ENCODE measurements at regions of chr9 and their contacts with region 1.

Region 1: DNA sequence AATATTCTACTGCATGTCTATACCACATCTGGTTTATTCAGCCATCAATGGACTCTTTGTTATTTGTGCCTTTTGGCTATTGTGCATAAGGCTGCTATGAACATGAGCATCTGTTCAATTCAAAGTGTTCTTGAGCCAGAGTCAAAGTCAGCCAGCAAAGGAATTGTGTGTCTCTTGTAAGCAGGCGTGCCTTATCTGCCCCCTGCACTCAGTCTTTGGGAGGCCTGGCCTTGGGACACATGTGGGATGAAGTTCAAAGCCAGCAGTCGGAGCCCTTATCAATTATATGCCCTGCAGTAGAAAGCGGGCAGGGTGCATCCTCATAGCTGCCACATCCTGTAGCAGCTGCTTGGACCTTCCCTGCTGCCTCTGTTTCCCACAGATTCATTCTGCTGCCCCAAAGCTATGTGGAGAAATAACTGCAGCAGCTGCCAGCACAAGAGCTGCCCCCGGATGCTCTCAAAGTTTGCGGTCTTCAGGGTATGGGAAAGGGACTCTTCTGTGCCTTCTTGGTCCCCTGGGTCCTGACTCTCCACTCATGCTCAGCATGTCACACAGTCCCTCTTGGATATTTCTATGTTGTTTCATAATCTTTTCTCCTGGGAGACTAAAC is 36.0 kb downstream of the STOM start:
- DNase-seq: no peak
- H3K4me3 ChIP-seq: no peak overlapping the region
- H3K4me3 Mint-ChIP-seq: no peak overlapping the region
- H3K27ac Mint-ChIP-seq: peak overlapping the region; percentile 28
- H3K4me1 ChIP-seq: peaks cover 12% of the 10 kb centered on the region; the same call in 1 of the 2 replicates
- H3K4me1 Mint-ChIP-seq: peaks cover 8% of the 10 kb centered on the region
- H3K27me3 ChIP-seq: no peaks in the 10 kb centered on the region
- H3K27me3 Mint-ChIP-seq: no peaks in the 10 kb centered on the region
- CTCF ChIP-seq: no peak

Region 2: DNA sequence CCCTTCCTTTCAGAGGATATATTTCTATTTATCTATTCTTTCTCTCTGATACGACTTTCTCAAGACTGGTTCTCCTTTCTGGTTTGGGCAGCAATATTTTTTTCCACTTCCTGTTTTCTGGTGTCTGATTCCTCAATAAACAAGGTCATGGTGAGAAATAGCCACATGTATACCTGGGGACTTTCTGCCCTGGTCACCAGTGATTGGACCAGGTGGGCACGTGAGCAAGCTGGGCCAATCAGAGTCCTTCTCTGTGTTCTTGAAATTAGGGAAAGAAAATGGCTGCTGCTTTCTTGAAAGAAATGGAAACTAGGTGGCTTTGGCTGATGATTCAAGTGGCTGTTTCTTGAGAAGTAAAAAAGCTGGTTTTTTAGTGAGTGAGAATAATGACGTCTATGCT is 84.5 kb before region 1 on chr9:
- CTCF ChIA-PET with region 1: no interaction called
- POLR2A ChIA-PET with region 1: no interaction called
- intact Hi-C with region 1: no loop called
- DNase-seq: no peak
- H3K4me3 ChIP-seq: no peak overlapping the region
- H3K4me3 Mint-ChIP-seq: no peak overlapping the region
- H3K27ac Mint-ChIP-seq: no peak overlapping the region
- H3K4me1 ChIP-seq: no peaks in the 10 kb centered on the region
- H3K4me1 Mint-ChIP-seq: no peaks in the 10 kb centered on the region
- H3K27me3 ChIP-seq: no peaks in the 10 kb centered on the region
- H3K27me3 Mint-ChIP-seq: peaks cover 3% of the 10 kb centered on the region
- CTCF ChIP-seq: no peak

Region 3: DNA sequence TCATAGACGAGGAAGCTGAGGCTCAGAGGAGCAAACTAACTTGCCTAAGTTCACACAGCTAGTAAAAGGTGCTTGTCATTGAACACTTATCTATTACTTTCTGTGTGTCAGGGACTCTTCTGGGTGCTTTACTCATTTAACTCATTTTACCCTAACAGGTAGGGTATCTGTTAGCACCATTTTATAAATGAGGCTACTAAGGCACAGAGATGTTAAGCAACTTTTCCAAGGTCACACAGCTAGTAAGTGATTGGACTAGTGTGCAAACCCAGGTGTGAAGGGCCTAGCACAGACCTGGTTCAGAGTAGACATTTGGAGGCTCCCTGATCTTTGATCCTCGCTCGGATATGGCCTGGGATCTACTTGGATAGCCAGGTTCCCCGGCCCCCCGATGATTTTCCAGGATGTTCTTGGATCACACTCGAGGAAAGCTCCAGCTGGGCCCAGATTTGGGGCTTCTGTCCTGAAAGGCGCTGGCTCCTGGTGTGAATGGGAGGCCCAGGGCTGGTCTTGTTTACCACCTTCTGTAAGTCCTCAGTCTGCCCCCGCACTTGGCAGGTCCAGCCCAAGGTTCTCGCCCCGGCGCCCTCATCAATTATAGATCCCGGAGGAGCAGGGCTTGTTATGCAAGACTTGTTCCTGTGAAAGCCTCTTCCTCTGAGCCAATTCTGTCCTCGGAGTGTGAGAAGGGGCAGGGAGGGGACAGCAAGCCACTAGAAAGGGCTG is 28.6 kb before region 1 on chr9:
- CTCF ChIA-PET with region 1: no interaction called
- POLR2A ChIA-PET with region 1: no interaction called
- intact Hi-C with region 1: no loop called
- DNase-seq: no peak
- H3K4me3 ChIP-seq: no peak overlapping the region
- H3K4me3 Mint-ChIP-seq: no peak overlapping the region
- H3K27ac Mint-ChIP-seq: no peak overlapping the region
- H3K4me1 ChIP-seq: peaks cover 22% of the 10 kb centered on the region
- H3K4me1 Mint-ChIP-seq: peaks cover 11% of the 10 kb centered on the region
- H3K27me3 ChIP-seq: no peaks in the 10 kb centered on the region
- H3K27me3 Mint-ChIP-seq: no peaks in the 10 kb centered on the region
- CTCF ChIP-seq: no peak

Region 4: GRCh38 chr9:121376214-121376830 is 42.3 kb after region 1 on chr9:
- CTCF ChIA-PET with region 1: interaction called, 4 read pairs
- POLR2A ChIA-PET with region 1: no interaction called
- intact Hi-C with region 1: loop called (anchors 1 kb)
- DNase-seq: no peak
- H3K4me3 ChIP-seq: no peak overlapping the region
- H3K4me3 Mint-ChIP-seq: no peak overlapping the region
- H3K27ac Mint-ChIP-seq: no peak overlapping the region
- H3K4me1 ChIP-seq: peaks cover 36% of the 10 kb centered on the region
- H3K4me1 Mint-ChIP-seq: peaks cover 30% of the 10 kb centered on the region
- H3K27me3 ChIP-seq: no peaks in the 10 kb centered on the region
- H3K27me3 Mint-ChIP-seq: no peaks in the 10 kb centered on the region
- CTCF ChIP-seq: peak in 1 of 2 experiments; percentile 28

Region 5: GRCh38 chr9:121596515-121596914 is 262.5 kb after region 1 on chr9:
- CTCF ChIA-PET with region 1: no interaction called
- POLR2A ChIA-PET with region 1: no interaction called
- intact Hi-C with region 1: no loop called
- DNase-seq: no peak
- H3K4me3 ChIP-seq: no peak overlapping the region
- H3K4me3 Mint-ChIP-seq: no peak overlapping the region
- H3K27ac Mint-ChIP-seq: no peak overlapping the region
- H3K4me1 ChIP-seq: 0 out of 2 replicates have a peak, but pooled peaks cover 5% of the 10 kb centered on the region
- H3K4me1 Mint-ChIP-seq: peaks cover 10% of the 10 kb centered on the region
- H3K27me3 ChIP-seq: no peaks in the 10 kb centered on the region; the same call in 1 of the 2 replicates
- H3K27me3 Mint-ChIP-seq: peaks cover 3% of the 10 kb centered on the region
- CTCF ChIP-seq: no peak

Measured in Caco-2 (cell line).